Aorta (tissue), 5 donors: ENCODE measurements at regions of chr12 and their contacts with region 1.

Region 1: GRCh38 chr12:75526655-75527511 is 15.5 kb upstream of the KRR1 start:
- DNase-seq: no peak
- ATAC-seq: no peak
- H3K4me3 ChIP-seq: no peak overlapping the region
- H3K27ac ChIP-seq: no peak overlapping the region
- H3K4me1 ChIP-seq: no peaks in the 10 kb centered on the region
- H3K27me3 ChIP-seq: no peaks in the 10 kb centered on the region

Region 2: GRCh38 chr12:76037130-76038103 is 510.5 kb after region 1 on chr12:
- intact Hi-C with region 1: loop called (anchors 2 kb)
- DNase-seq: no peak
- ATAC-seq: peak; percentile 87
- H3K4me3 ChIP-seq: no peak overlapping the region
- H3K27ac ChIP-seq: no peak overlapping the region
- H3K4me1 ChIP-seq: no peaks in the 10 kb centered on the region
- H3K27me3 ChIP-seq: no peaks in the 10 kb centered on the region